ENCODE measurements at regions of chr16 and their contacts with region 1.

Region 1: DNA sequence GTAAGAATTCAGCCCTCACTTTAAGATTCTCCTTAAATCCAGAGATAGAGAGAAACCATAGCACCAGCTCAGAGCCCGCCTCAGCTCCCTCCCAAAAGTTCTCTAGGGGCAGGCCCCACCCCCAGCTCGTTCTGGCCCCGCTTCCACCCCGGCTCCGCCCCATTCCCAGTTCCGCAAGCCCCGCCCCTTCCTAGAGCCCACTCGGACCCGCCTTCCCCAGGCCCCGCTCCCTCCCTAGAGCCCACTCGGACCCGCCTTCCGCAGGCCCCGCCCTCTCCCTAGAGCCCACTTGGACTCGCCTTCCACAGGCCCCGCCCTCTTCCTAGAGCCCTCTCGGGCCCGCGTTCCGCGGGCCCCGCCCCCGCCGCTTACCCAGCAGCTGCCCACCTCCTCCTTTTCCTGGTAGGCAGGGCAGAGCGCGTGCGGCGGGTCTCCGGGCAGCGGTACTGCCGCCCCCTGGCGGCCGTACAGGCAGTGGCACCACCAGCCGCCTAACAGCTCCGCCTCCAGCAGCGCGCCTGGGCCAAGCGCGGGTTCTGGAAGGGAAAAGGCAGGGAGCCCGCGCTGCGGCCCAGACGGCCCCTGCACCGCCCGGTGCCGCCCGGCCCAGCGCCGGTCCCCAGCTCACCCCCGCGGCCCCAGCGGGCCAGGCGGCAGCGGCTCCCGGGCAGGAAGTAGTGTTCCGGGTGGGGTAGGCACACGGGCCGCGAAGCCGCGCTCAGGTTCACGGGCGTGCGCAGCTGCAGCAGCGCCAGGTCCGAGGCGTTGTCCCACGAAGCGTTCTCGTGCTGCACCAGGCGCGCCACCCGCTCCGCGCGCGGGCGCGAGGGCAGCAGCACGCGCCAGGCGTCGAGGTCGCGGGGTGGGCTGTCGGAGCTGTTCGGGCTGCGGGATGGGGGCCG is 6.8 kb upstream of the PRSS8 start:
- DNase-seq: peak; percentile 93 to 99 (median 95)
- H3K4me3 ChIP-seq: peak overlapping the region; percentile 59
- H3K4me3 Mint-ChIP-seq: peak overlapping the region; percentile 68 to 92 (median 78)
- H3K27ac ChIP-seq: peak overlapping the region; percentile 61
- H3K27ac Mint-ChIP-seq: peak overlapping the region; percentile 74 to 90 (median 86)
- H3K4me1 ChIP-seq: peaks cover 19% of the 10 kb centered on the region
- H3K4me1 Mint-ChIP-seq: peaks cover 5 to 14% (median 6%) of the 10 kb centered on the region in 3 donors
- H3K27me3 ChIP-seq: no peaks in the 10 kb centered on the region
- H3K27me3 Mint-ChIP-seq: no peaks in the 10 kb centered on the region

Region 2: GRCh38 chr16:30984669-30985400 is 157.5 kb before region 1 on chr16 and contains the start of gene HSD3B7:
- CTCF ChIA-PET with region 1: interaction called, 29 read pairs
- POLR2A ChIA-PET with region 1: interaction called, 9 read pairs
- DNase-seq: peak; percentile 63 to 84 (median 75)
- H3K4me3 ChIP-seq: no peak within 1 kb of the TSS
- H3K4me3 Mint-ChIP-seq: no peak within 1 kb of the TSS
- H3K27ac ChIP-seq: no peak within 1 kb of the TSS
- H3K27ac Mint-ChIP-seq: no peak within 1 kb of the TSS
- H3K4me1 ChIP-seq: no peaks in the 10 kb centered on the region
- H3K4me1 Mint-ChIP-seq: peaks cover 0 to 6% (median 0%) of the 10 kb centered on the region in 3 donors
- H3K27me3 ChIP-seq: no peaks in the 10 kb centered on the region
- H3K27me3 Mint-ChIP-seq: no peaks in the 10 kb centered on the region
- total RNA-seq, gene HSD3B7: 1.6 to 2.1 TPM

Region 3: GRCh38 chr16:31073968-31074813 is 68.2 kb before region 1 on chr16 and contains the starts of genes ZNF646 and ZNF668:
- CTCF ChIA-PET with region 1: interaction called, 8 read pairs
- POLR2A ChIA-PET with region 1: interaction called, 21 read pairs
- DNase-seq: peak; percentile 96 to 99 (median 97)
- H3K4me3 ChIP-seq: peak within 1 kb of the TSS; percentile 100
- H3K4me3 Mint-ChIP-seq: peak within 1 kb of the TSS; percentile 87 to 97 (median 97)
- H3K27ac ChIP-seq: peak within 1 kb of the TSS; percentile 89
- H3K27ac Mint-ChIP-seq: peak within 1 kb of the TSS; percentile 89 to 100 (median 98)
- H3K4me1 ChIP-seq: peaks cover 24% of the 10 kb centered on the region
- H3K4me1 Mint-ChIP-seq: peaks cover 37 to 55% (median 41%) of the 10 kb centered on the region in 3 donors
- H3K27me3 ChIP-seq: no peaks in the 10 kb centered on the region
- H3K27me3 Mint-ChIP-seq: peaks cover 0 to 3% of the 10 kb centered on the region in 2 donors
- total RNA-seq, gene ZNF646: 23.4 to 25.9 TPM
- total RNA-seq, gene ZNF668: 15.9 to 20.5 TPM

Region 4: GRCh38 chr16:31128711-31129567 is 13.4 kb before region 1 on chr16:
- CTCF ChIA-PET with region 1: interaction called, 21 read pairs
- POLR2A ChIA-PET with region 1: no interaction called
- DNase-seq: no peak
- H3K4me3 ChIP-seq: no peak overlapping the region
- H3K4me3 Mint-ChIP-seq: no peak overlapping the region
- H3K27ac ChIP-seq: peak overlapping the region; percentile 61
- H3K27ac Mint-ChIP-seq: no peak overlapping the region
- H3K4me1 ChIP-seq: no peaks in the 10 kb centered on the region
- H3K4me1 Mint-ChIP-seq: peaks cover 0 to 1% (median 0%) of the 10 kb centered on the region in 3 donors
- H3K27me3 ChIP-seq: no peaks in the 10 kb centered on the region
- H3K27me3 Mint-ChIP-seq: peaks cover 0 to 2% of the 10 kb centered on the region in 2 donors

Region 5: DNA sequence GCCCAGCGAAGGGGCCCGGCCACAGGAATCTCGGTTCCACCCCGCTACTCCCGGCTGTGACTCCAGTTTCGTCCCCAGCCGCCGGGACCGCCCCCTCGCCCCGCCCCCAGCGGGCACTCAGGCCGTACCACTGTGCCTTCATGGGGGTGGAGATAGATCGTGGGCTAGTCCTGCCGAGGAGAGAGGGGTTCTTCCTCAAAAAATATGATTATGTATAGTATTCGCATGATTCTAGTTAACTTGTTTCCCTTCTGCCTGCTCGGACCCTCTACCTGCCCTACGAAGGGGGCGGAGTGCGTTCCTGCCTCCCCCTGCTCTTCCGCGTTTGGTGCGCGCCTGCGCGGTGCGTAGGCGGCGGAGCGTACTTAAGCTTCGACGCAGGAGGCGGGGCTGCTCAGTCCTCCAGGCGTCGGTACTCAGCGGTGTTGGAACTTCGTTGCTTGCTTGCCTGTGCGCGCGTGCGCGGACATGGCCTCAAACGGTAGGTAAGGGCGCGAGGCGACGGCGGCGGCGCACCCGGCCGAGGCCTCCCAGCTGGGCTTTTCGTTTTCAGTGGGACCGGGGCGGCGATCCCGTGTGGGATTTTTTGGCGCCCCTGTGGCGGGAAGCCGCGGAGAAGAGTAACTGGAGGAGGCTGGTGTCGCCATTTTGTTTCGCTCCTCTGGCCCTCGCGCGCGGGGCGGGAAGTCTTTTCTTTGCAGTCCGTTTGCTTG is 37.5 kb after region 1 on chr16 and contains the start of gene FUS:
- CTCF ChIA-PET with region 1: interaction called, 44 read pairs
- POLR2A ChIA-PET with region 1: interaction called, 72 read pairs
- DNase-seq: peak; percentile 86 to 95 (median 92)
- H3K4me3 ChIP-seq: peak within 1 kb of the TSS; percentile 85
- H3K4me3 Mint-ChIP-seq: peak within 1 kb of the TSS; percentile 90 to 100 (median 97)
- H3K27ac ChIP-seq: peak within 1 kb of the TSS; percentile 96
- H3K27ac Mint-ChIP-seq: peak within 1 kb of the TSS; percentile 94 to 100 (median 96)
- H3K4me1 ChIP-seq: peaks cover 62% of the 10 kb centered on the region
- H3K4me1 Mint-ChIP-seq: peaks cover 53 to 70% (median 57%) of the 10 kb centered on the region in 3 donors
- H3K27me3 ChIP-seq: no peaks in the 10 kb centered on the region
- H3K27me3 Mint-ChIP-seq: peaks cover 0 to 8% of the 10 kb centered on the region in 2 donors
- total RNA-seq, gene FUS: 621 to 671 TPM

Region 6: GRCh38 chr16:31273676-31274075 is 131.3 kb after region 1 on chr16:
- CTCF ChIA-PET with region 1: no interaction called
- POLR2A ChIA-PET with region 1: no interaction called
- DNase-seq: no peak
- H3K4me3 ChIP-seq: no peak overlapping the region
- H3K4me3 Mint-ChIP-seq: no peak overlapping the region
- H3K27ac ChIP-seq: no peak overlapping the region
- H3K27ac Mint-ChIP-seq: no peak overlapping the region
- H3K4me1 ChIP-seq: no peaks in the 10 kb centered on the region
- H3K4me1 Mint-ChIP-seq: no peaks in the 10 kb centered on the region
- H3K27me3 ChIP-seq: no peaks in the 10 kb centered on the region
- H3K27me3 Mint-ChIP-seq: peaks cover 2 to 5% of the 10 kb centered on the region in 2 donors

Region 7: GRCh38 chr16:31458844-31459721 is 316.7 kb after region 1 on chr16 and contains the start of gene ARMC5:
- CTCF ChIA-PET with region 1: interaction called, 18 read pairs
- POLR2A ChIA-PET with region 1: interaction called, 3 read pairs
- DNase-seq: peak; percentile 95 to 98 (median 98)
- H3K4me3 ChIP-seq: peak within 1 kb of the TSS; percentile 79
- H3K4me3 Mint-ChIP-seq: peak within 1 kb of the TSS; percentile 91 to 97 (median 94)
- H3K27ac ChIP-seq: peak within 1 kb of the TSS; percentile 97
- H3K27ac Mint-ChIP-seq: peak within 1 kb of the TSS; percentile 95 to 99 (median 98)
- H3K4me1 ChIP-seq: peaks cover 47% of the 10 kb centered on the region
- H3K4me1 Mint-ChIP-seq: peaks cover 43 to 53% (median 48%) of the 10 kb centered on the region in 3 donors
- H3K27me3 ChIP-seq: no peaks in the 10 kb centered on the region
- H3K27me3 Mint-ChIP-seq: no peaks in the 10 kb centered on the region
- total RNA-seq, gene ARMC5: 14.3 to 15.9 TPM

Region 8: GRCh38 chr16:31513126-31513525 is 370.8 kb after region 1 on chr16:
- CTCF ChIA-PET with region 1: no interaction called
- POLR2A ChIA-PET with region 1: no interaction called
- DNase-seq: no peak
- H3K4me3 ChIP-seq: no peak overlapping the region
- H3K4me3 Mint-ChIP-seq: no peak overlapping the region
- H3K27ac ChIP-seq: no peak overlapping the region
- H3K27ac Mint-ChIP-seq: peak overlapping the region in 1 of 8 donors; percentile 27
- H3K4me1 ChIP-seq: peaks cover 14% of the 10 kb centered on the region
- H3K4me1 Mint-ChIP-seq: peaks cover 17 to 27% (median 22%) of the 10 kb centered on the region in 3 donors
- H3K27me3 ChIP-seq: no peaks in the 10 kb centered on the region
- H3K27me3 Mint-ChIP-seq: peaks cover 6 to 12% of the 10 kb centered on the region in 2 donors

Measured in CD8-positive, alpha-beta memory T cell (primary cell).